Esophagus squamous epithelium (tissue), 5 donors: ENCODE measurements at regions of chr3 and their contacts with region 1.

Region 1: GRCh38 chr3:157201648-157202278 is 41.8 kb upstream of the CCNL1 start:
- DNase-seq: no peak
- H3K4me3 ChIP-seq: no peak overlapping the region
- H3K27ac ChIP-seq: no peak overlapping the region
- H3K4me1 ChIP-seq: peaks cover 0 to 5% (median 0%) of the 10 kb centered on the region in 3 donors
- H3K27me3 ChIP-seq: peaks cover 0 to 11% (median 0%) of the 10 kb centered on the region in 4 donors
- CTCF ChIP-seq: peak in 5 of 6 experiments; percentile 38 to 63 (median 43)
- POLR2A ChIP-seq: no peak

Region 2: DNA sequence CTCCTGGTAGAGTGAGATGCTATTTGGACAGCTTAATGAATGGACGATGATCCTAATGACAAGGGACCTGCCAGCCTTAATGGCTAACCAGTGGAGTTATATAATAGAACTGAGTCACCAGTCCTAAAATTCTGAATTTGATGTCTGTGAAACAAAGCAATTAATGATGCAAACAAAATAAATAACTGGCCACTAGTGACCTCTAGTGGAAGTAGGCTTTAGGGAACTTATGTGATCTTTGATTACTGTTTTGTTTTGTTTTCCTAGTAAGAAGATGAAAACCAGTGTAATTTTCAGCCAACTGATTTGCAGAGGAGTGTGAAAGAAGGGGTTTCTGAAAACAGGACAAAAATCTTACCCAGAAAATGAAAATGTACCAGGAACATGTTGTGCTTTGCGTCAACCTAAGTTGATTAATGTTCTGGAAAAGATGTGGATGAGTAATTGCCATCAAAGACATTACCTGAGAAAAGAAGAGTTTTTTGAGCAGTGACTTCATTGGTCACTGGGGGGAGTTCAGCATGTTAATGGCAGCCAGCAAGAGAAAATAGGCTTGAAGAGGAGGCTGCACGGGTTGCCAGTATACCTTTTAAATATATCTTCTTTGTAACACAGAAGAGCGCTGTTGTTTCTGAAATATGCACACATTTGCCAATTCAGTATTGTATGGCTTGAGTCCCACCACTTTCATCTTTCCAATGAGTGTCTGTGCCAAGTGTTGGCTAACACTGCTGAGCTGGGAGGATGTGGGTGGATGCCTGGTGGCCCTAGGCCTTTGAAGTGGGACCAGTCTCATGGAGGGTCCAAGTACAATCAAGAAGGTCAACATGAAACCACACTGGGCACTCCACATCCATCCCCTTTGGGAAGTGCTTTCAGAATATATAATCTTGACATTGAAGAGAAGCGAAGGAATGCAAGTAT is 292.1 kb after region 1 on chr3:
- intact Hi-C with region 1: loop called (anchors 5 kb)
- DNase-seq: no peak
- H3K4me3 ChIP-seq: no peak overlapping the region
- H3K27ac ChIP-seq: no peak overlapping the region
- H3K4me1 ChIP-seq: peaks cover 0 to under 1% (median 0%) of the 10 kb centered on the region in 3 donors
- H3K27me3 ChIP-seq: peaks cover 0 to 13% (median 0%) of the 10 kb centered on the region in 4 donors
- CTCF ChIP-seq: peak; percentile 20 to 59 (median 37)
- POLR2A ChIP-seq: no peak